ENCODE measurements at regions of chr10 and their contacts with region 1.

Region 1: GRCh38 chr10:125102231-125102630 is 58.1 kb downstream of the CTBP2 start:
- DNase-seq: no peak
- ATAC-seq: 0 out of 2 replicates have a peak, but pooled peaks have one; percentile 8
- H3K4me3 ChIP-seq: no peak overlapping the region
- H3K27ac ChIP-seq: 0 out of 2 replicates have a peak overlapping the region, but pooled peaks have one; percentile 14
- H3K4me1 ChIP-seq: no peaks in the 10 kb centered on the region; the same call in 1 of the 2 replicates
- H3K27me3 ChIP-seq: no peaks in the 10 kb centered on the region
- CTCF ChIP-seq: no peak

Region 2: GRCh38 chr10:125060826-125061556 is 41.2 kb before region 1 on chr10:
- CTCF ChIA-PET with region 1: no interaction called
- POLR2A ChIA-PET with region 1: no interaction called
- in situ Hi-C with region 1: no loop called
- intact Hi-C with region 1: no loop called
- DNase-seq: no peak
- ATAC-seq: peak; percentile 82
- H3K4me3 ChIP-seq: no peak overlapping the region
- H3K27ac ChIP-seq: no peak overlapping the region
- H3K4me1 ChIP-seq: peaks cover 38% of the 10 kb centered on the region
- H3K27me3 ChIP-seq: no peaks in the 10 kb centered on the region
- CTCF ChIP-seq: peak; percentile 93

Region 3: GRCh38 chr10:125112697-125113494 is 10.7 kb after region 1 on chr10:
- CTCF ChIA-PET with region 1: interaction called, 14 read pairs
- POLR2A ChIA-PET with region 1: no interaction called
- in situ Hi-C with region 1: no loop called
- intact Hi-C with region 1: no loop called
- DNase-seq: no peak
- ATAC-seq: no peak
- H3K4me3 ChIP-seq: no peak overlapping the region
- H3K27ac ChIP-seq: 0 out of 2 replicates have a peak overlapping the region, but pooled peaks have one; percentile 24
- H3K4me1 ChIP-seq: peaks cover 21% of the 10 kb centered on the region
- H3K27me3 ChIP-seq: no peaks in the 10 kb centered on the region
- CTCF ChIP-seq: no peak